Endothelial cell of umbilical vein (primary cell): ENCODE measurements at regions of chr3 and their contacts with region 1.

Region 1: DNA sequence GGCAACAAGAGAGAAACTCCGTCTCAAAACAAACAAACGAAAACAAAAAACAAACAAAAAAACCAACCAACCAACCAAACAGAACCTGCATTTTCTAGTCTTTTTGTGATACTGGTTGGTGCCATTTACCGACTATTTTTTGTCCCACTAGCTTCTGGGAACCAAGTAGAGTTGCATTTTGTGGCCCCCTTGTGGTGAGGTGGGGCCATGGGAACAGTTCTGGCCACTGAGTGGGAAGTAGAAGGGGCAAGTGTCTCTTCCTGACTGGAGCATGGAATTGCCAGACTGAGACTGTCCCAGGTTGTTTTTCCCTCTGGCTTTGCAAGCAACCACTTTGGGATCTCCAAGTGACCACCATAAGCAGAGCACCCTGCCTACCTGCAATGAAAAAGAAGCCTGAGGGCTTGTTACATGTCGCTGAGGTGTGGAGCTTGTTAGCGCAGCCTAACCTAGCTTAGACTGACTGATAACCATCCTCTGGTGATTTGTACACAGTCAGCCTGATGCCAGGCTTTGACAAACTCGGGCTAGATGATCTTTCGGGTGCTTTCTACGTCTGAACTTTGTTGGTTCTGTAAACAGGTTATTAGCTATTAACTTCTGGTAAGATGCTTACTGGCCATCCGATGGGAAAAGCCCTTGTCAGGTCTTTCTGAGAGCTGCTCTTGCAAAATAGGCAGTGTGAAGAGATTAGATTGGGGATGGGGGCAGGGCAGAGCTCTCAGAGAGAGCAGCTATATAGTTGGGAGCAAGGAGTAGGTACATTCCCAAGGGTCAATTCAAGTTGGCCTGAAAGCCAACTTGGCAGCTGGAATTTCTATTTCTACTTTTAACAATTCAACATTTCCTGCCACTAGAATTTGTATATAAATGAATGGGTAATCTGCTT is 172.2 kb downstream of the SSR3 start:
- DNase-seq: peak; percentile 49
- H3K4me3 ChIP-seq: no peak overlapping the region
- H3K27ac ChIP-seq: no peak overlapping the region
- H3K4me1 ChIP-seq: no peaks in the 10 kb centered on the region
- H3K27me3 ChIP-seq: no peaks in the 10 kb centered on the region
- CTCF ChIP-seq: peak; percentile 76 to 84
- POLR2A ChIP-seq: no peak

Region 2: GRCh38 chr3:156160647-156161046 is 222.1 kb before region 1 on chr3:
- CTCF ChIA-PET with region 1: interaction called, 13 read pairs
- POLR2A ChIA-PET with region 1: no interaction called
- dilution Hi-C with region 1: no loop called
- intact Hi-C with region 1: no loop called
- DNase-seq: peak; percentile 28
- H3K4me3 ChIP-seq: no peak overlapping the region
- H3K27ac ChIP-seq: no peak overlapping the region
- H3K4me1 ChIP-seq: peaks cover 7% of the 10 kb centered on the region
- H3K27me3 ChIP-seq: no peaks in the 10 kb centered on the region
- CTCF ChIP-seq: no peak
- POLR2A ChIP-seq: no peak

Region 3: GRCh38 chr3:156240642-156241041 is 142.1 kb before region 1 on chr3:
- CTCF ChIA-PET with region 1: interaction called, 13 read pairs
- POLR2A ChIA-PET with region 1: no interaction called
- dilution Hi-C with region 1: no loop called
- intact Hi-C with region 1: no loop called
- DNase-seq: no peak
- H3K4me3 ChIP-seq: no peak overlapping the region
- H3K27ac ChIP-seq: no peak overlapping the region
- H3K4me1 ChIP-seq: peaks cover 8% of the 10 kb centered on the region
- H3K27me3 ChIP-seq: no peaks in the 10 kb centered on the region
- CTCF ChIP-seq: no peak
- POLR2A ChIP-seq: no peak

Region 4: DNA sequence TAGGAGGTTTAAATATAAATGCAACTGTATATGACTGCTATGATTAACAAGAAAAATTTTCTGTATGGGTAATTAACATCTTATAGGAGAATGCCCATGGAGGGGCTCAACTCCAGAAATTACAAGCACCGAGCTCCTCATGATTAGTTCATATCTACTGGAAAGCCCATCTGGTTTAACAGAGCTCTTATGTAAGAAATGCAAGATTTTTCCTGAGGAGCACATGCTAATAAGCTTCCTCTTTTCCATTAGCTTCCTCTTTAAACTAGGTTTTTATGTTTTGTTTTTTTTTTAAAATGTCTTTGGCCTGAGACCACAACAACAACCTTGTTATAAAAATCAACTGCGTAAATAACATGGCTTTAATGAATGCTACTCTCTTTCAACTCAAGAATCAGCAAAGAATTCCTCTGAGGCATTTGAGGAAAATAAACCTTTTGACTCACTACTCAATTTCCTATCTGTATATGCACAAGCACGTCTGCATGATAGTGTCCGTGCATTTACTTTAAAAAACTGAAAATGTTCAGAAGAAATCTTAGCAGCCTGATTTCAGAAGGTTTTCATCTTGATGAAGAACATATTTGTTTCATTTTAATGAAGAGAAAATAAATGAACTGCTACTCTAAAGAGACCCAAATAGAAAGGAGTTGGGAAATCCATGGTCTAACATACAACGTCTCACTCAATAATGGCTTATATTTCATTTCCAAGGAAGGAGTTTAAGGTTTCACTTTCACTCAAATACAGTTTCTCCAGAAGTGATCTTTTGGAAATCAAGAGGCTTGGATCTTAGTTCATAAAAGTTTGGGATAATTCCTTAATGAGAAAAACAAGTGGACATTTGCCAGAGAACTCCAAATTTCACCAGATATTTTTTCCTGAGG is 81.5 kb before region 1 on chr3:
- CTCF ChIA-PET with region 1: interaction called, 10 read pairs
- POLR2A ChIA-PET with region 1: no interaction called
- dilution Hi-C with region 1: no loop called
- intact Hi-C with region 1: no loop called
- DNase-seq: peak; percentile 47
- H3K4me3 ChIP-seq: no peak overlapping the region
- H3K27ac ChIP-seq: no peak overlapping the region
- H3K4me1 ChIP-seq: peaks cover 34% of the 10 kb centered on the region
- H3K27me3 ChIP-seq: no peaks in the 10 kb centered on the region
- CTCF ChIP-seq: no peak
- POLR2A ChIP-seq: no peak

Region 5: DNA sequence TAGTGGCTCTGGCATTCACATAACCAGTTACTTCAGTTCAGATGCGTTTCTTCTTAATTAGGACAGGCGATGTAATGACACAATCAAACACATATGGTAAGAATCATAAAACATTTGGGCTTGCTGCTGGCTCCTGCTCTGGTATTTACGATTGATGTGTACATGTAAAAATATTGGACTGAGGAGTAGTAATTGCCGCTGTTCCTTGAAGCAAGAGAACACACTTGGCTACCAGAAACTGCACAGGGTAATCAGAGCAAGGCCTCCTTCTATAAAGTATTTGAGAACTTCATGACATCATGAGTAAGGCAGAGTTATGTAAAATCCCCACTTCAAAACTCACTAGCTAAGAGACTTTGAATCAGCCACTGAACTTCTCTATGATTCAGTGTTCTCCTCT is 14.1 kb after region 1 on chr3:
- CTCF ChIA-PET with region 1: interaction called, 24 read pairs
- POLR2A ChIA-PET with region 1: no interaction called
- dilution Hi-C with region 1: no loop called
- intact Hi-C with region 1: no loop called
- DNase-seq: no peak
- H3K4me3 ChIP-seq: no peak overlapping the region
- H3K27ac ChIP-seq: no peak overlapping the region
- H3K4me1 ChIP-seq: no peaks in the 10 kb centered on the region
- H3K27me3 ChIP-seq: no peaks in the 10 kb centered on the region
- CTCF ChIP-seq: no peak
- POLR2A ChIP-seq: no peak

Region 6: DNA sequence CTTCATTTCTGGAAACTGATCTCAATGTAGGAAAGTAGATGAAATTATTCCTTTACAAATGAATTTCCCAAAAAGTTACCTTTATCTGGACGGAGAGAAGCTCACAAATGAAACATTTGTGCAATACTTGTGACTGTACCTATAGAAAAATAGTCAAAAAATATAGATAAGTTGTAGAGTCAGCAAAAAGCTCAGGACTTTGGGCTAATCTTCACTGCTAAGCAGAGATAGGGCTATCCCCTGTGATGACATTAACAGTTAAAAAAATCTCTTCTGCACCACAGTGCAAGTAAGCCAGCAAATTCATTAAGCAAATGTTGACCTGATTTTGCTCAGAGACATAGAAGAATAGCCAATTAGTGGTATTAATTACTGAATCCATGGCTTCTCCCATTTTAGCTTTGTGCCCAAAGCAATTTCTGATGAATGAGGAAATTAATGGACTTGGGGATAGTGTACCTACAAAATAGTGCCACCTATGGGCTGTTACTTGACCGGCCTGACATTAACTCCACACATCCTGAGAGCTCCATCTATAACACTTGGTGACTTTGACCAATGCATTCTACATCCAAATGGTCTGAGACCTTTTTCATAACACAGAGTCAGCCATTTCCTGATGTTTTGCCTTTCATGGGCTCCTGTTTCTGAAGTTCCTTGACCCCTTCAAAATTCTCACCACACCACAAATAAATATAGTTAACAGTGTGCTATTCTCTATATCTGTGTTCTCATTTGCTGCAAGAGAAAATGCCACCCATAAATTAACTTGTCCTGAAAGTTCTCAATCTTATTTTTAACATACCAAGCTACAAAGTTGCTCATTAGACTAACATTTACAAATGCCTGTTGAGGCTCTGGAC is 67.2 kb after region 1 on chr3:
- CTCF ChIA-PET with region 1: interaction called, 34 read pairs
- POLR2A ChIA-PET with region 1: no interaction called
- dilution Hi-C with region 1: no loop called
- intact Hi-C with region 1: no loop called
- DNase-seq: peak; percentile 67
- H3K4me3 ChIP-seq: no peak overlapping the region
- H3K27ac ChIP-seq: no peak overlapping the region
- H3K4me1 ChIP-seq: peaks cover 5% of the 10 kb centered on the region
- H3K27me3 ChIP-seq: no peaks in the 10 kb centered on the region
- CTCF ChIP-seq: peak; percentile 58 to 59
- POLR2A ChIP-seq: no peak